ENCODE measurements at regions of chr5 and their contacts with region 1.

Region 1: DNA sequence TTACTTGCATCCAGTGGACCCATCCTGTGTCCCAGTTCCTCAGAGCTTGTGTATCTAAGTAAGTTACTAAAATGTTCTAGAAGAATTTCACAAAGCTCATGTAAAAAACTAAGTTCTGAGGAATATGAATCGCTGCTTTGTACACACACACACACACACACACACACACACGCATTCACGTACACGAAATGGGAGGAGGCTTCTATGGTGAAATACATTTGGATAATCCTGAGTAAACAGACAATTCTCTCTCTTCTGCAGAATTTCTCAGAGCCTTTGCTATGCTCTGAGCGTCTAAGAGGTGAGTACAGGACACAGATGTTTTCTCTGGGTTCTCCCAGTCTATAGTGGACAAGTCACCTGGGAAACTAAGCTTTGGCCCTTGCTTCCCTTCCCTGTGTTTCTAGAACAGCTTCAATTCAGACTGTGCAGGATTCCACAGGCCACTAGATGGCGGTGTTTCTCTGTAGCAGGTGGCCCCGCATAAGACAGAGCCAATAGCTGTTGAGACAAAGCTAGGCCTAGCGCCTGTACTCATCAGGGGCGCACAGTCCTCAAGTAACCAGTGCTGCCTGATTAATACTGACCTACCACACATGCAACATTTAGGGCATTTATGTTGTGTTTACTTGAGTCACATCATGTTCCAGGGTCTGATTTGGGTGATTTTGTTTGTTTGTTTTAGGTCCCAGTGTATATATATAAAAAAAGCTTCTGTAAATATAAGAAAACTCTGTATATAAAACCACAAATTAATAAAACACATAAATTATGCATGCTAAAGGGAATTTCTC is 114.8 kb downstream of the LIFR start:
- DNase-seq: peak; percentile 91
- ATAC-seq: peak; percentile 100
- H3K4me3 Mint-ChIP-seq: no peak overlapping the region
- H3K27ac Mint-ChIP-seq: no peak overlapping the region
- H3K4me1 Mint-ChIP-seq: no peaks in the 10 kb centered on the region
- H3K27me3 Mint-ChIP-seq: peaks cover 42% of the 10 kb centered on the region
- CTCF ChIP-seq: peak; percentile 90

Region 2: GRCh38 chr5:37722236-37723146 is 719.2 kb before region 1 on chr5:
- CTCF ChIA-PET with region 1: no interaction called
- POLR2A ChIA-PET with region 1: no interaction called
- intact Hi-C with region 1: no loop called
- DNase-seq: peak; percentile 73
- ATAC-seq: peak; percentile 91
- H3K4me3 Mint-ChIP-seq: peak overlapping the region; percentile 11
- H3K27ac Mint-ChIP-seq: peak overlapping the region; percentile 86
- H3K4me1 Mint-ChIP-seq: peaks cover 29% of the 10 kb centered on the region
- H3K27me3 Mint-ChIP-seq: no peaks in the 10 kb centered on the region
- CTCF ChIP-seq: no peak

Region 3: GRCh38 chr5:38420691-38421390 is 20.8 kb before region 1 on chr5:
- CTCF ChIA-PET with region 1: interaction called, 19 read pairs
- POLR2A ChIA-PET with region 1: no interaction called
- intact Hi-C with region 1: no loop called
- DNase-seq: peak; percentile 54
- ATAC-seq: no peak
- H3K4me3 Mint-ChIP-seq: no peak overlapping the region
- H3K27ac Mint-ChIP-seq: no peak overlapping the region
- H3K4me1 Mint-ChIP-seq: no peaks in the 10 kb centered on the region
- H3K27me3 Mint-ChIP-seq: peaks cover 23% of the 10 kb centered on the region
- CTCF ChIP-seq: peak; percentile 78

Region 4: DNA sequence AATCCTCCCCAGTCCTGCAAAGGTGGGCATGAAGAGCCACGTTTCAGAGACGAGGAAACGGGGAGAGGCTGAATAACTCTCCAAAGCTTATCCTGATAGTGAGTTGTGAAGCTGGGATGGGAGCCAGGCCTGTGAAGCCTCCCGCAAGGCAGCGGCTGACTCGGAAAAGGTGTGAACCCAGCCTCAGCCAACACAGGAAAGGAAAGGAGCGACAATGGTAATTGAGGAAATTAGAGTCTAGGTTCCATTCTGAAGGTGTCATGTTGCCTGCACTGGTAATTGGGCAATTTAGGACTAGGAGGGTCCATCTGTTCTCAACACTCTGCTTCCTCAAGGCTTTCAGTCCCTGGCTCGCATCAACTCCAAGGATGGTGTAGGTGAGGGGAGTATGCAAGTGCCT is 31.4 kb after region 1 on chr5:
- CTCF ChIA-PET with region 1: interaction called, 12 read pairs
- POLR2A ChIA-PET with region 1: no interaction called
- intact Hi-C with region 1: no loop called
- DNase-seq: no peak
- ATAC-seq: no peak
- H3K4me3 Mint-ChIP-seq: no peak overlapping the region
- H3K27ac Mint-ChIP-seq: no peak overlapping the region
- H3K4me1 Mint-ChIP-seq: no peaks in the 10 kb centered on the region
- H3K27me3 Mint-ChIP-seq: peaks cover 50% of the 10 kb centered on the region
- CTCF ChIP-seq: no peak

Region 5: GRCh38 chr5:38540314-38540713 is 98.7 kb after region 1 on chr5:
- CTCF ChIA-PET with region 1: interaction called, 11 read pairs
- POLR2A ChIA-PET with region 1: no interaction called
- intact Hi-C with region 1: no loop called
- DNase-seq: no peak
- ATAC-seq: no peak
- H3K4me3 Mint-ChIP-seq: no peak overlapping the region
- H3K27ac Mint-ChIP-seq: no peak overlapping the region
- H3K4me1 Mint-ChIP-seq: no peaks in the 10 kb centered on the region
- H3K27me3 Mint-ChIP-seq: peaks cover 21% of the 10 kb centered on the region
- CTCF ChIP-seq: no peak

Region 6: GRCh38 chr5:38666668-38667498 is 225.2 kb after region 1 on chr5:
- CTCF ChIA-PET with region 1: interaction called, 14 read pairs
- POLR2A ChIA-PET with region 1: no interaction called
- intact Hi-C with region 1: loop called (anchors 5 kb)
- DNase-seq: peak; percentile 14
- ATAC-seq: no peak
- H3K4me3 Mint-ChIP-seq: no peak overlapping the region
- H3K27ac Mint-ChIP-seq: no peak overlapping the region
- H3K4me1 Mint-ChIP-seq: no peaks in the 10 kb centered on the region
- H3K27me3 Mint-ChIP-seq: peaks cover 20% of the 10 kb centered on the region
- CTCF ChIP-seq: no peak

Region 7: GRCh38 chr5:38871790-38872551 is 430.3 kb after region 1 on chr5:
- CTCF ChIA-PET with region 1: no interaction called
- POLR2A ChIA-PET with region 1: no interaction called
- intact Hi-C with region 1: no loop called
- DNase-seq: no peak
- ATAC-seq: no peak
- H3K4me3 Mint-ChIP-seq: no peak overlapping the region
- H3K27ac Mint-ChIP-seq: no peak overlapping the region
- H3K4me1 Mint-ChIP-seq: no peaks in the 10 kb centered on the region
- H3K27me3 Mint-ChIP-seq: peaks cover 22% of the 10 kb centered on the region
- CTCF ChIP-seq: no peak

Region 8: DNA sequence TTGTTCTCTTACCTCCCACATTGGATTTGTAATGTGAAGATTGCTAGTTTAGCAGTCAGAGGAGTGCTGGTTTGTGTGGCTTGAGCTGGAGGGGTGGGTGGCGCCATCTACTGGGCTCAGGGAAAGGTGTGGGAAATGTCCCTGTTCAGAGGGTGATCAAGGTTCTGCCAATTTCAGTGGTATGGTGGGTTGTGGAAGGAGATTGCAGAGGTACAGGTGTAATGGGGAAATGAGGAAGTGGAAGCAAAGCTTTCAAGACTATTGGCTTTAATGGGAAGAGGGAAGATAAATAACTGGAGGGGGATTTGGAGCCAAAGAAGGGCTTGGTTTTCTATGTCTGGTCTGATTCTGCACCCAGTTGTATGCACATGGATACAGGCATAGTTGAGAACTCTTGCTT is 480.5 kb after region 1 on chr5:
- CTCF ChIA-PET with region 1: interaction called, 25 read pairs
- POLR2A ChIA-PET with region 1: no interaction called
- intact Hi-C with region 1: loop called (anchors 5 kb)
- DNase-seq: peak; percentile 69
- ATAC-seq: peak; percentile 71
- H3K4me3 Mint-ChIP-seq: no peak overlapping the region
- H3K27ac Mint-ChIP-seq: no peak overlapping the region
- H3K4me1 Mint-ChIP-seq: no peaks in the 10 kb centered on the region
- H3K27me3 Mint-ChIP-seq: peaks cover 26% of the 10 kb centered on the region
- CTCF ChIP-seq: peak; percentile 74